Gastrocnemius medialis (tissue), 4 donors: ENCODE measurements at regions of chr1 and their contacts with region 1.

Region 1: GRCh38 chr1:226407497-226408284 is at the start of gene PARP1:
- DNase-seq: peak; percentile 80 to 87
- ATAC-seq: peak; percentile 77 to 81
- H3K4me3 ChIP-seq: peak within 1 kb of the TSS; percentile 67 to 95 (median 87)
- H3K27ac ChIP-seq: peak within 1 kb of the TSS; percentile 71 to 87 (median 80)
- H3K4me1 ChIP-seq: peaks cover 43 to 45% of the 10 kb centered on the region in 2 donors
- H3K27me3 ChIP-seq: no peaks in the 10 kb centered on the region
- CTCF ChIP-seq: peak in 4 of 5 experiments; percentile 85 to 97 (median 93)
- POLR2A ChIP-seq: peak; percentile 75 to 78
- total RNA-seq, gene PARP1: 63.8 to 117 (median 99.7) TPM

Region 2: DNA sequence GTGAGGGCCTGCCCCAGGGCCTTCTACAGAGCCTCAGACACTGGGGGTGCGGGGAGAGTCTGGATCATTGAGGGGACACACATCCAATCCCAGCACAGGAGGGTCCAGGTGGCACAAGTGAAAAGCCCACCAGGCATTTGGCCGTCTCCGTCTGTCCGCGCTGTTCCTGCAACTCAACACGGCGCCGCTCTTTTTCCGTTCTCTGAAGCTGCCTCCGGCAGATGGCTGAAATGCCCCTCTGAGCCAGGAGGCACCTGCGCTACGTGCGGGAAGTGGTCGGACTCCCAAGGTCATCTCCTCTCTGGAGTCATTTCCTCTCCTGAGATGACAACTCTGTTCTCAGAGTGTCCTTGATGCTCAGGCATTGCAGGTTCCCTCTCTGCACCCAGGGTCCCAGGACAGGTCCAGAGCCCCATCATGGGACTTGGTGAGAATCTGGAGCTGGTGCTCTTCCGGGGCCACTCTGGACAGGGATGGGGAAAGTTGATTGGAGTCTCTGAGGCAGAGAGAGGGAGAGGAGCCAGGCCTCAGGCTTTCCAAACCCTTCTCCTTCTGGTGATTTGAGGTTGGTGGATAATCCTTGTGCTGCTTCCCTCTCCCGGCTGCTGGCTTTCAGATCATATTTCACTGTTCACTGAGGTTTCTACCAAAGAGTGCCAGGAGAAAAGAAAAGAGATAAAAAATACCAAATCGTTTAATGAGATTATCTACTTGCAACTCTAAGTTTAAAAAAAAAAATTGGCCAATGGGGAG is 198.2 kb before region 1 on chr1:
- in situ Hi-C with region 1: no loop called
- intact Hi-C with region 1: no loop called
- DNase-seq: no peak
- ATAC-seq: no peak
- H3K4me3 ChIP-seq: no peak overlapping the region
- H3K27ac ChIP-seq: no peak overlapping the region
- H3K4me1 ChIP-seq: no peaks in the 10 kb centered on the region
- H3K27me3 ChIP-seq: no peaks in the 10 kb centered on the region
- CTCF ChIP-seq: no peak
- POLR2A ChIP-seq: no peak

Region 3: DNA sequence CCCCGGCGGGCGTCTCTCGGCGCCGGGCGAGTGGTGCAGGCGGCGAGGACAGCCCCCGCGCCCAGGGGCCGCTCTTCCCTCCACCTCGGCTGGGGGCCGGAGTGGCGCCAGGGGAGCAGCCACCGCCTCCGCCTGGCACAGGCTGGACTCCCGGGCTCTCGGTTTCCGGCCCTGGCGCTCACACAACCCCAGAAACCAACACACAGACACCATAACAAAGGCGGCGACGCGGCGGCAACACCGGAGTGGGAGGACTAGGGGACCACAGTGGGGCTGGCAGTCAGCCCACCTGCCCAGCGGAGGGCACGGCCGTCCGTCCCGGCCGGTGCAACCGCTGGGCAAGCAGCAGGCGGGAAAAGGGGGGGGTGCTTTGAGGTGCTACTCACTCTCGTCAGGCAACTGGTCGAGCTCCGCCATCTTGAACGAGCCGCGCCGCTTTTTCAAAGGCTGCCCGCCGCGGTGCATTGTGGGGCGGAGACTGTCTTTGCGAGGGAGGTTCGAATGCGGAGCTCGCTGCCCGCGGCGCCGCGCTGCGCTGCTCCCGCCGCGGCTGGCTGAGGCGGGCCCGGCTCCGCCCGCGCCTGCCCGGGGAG is 98.9 kb before region 1 on chr1 and contains the start of gene LIN9:
- in situ Hi-C with region 1: no loop called
- intact Hi-C with region 1: loop called (anchors 2 kb)
- DNase-seq: peak; percentile 69 to 75
- ATAC-seq: peak; percentile 96 to 99
- H3K4me3 ChIP-seq: peak within 1 kb of the TSS; percentile 86 to 98 (median 96)
- H3K27ac ChIP-seq: peak within 1 kb of the TSS; percentile 76 to 85 (median 82)
- H3K4me1 ChIP-seq: peaks cover 7 to 9% of the 10 kb centered on the region in 2 donors
- H3K27me3 ChIP-seq: no peaks in the 10 kb centered on the region
- CTCF ChIP-seq: no peak
- POLR2A ChIP-seq: peak in 1 of 2 donors; percentile 39
- total RNA-seq, gene LIN9: 2.1 to 4.7 (median 2.8) TPM

Region 4: DNA sequence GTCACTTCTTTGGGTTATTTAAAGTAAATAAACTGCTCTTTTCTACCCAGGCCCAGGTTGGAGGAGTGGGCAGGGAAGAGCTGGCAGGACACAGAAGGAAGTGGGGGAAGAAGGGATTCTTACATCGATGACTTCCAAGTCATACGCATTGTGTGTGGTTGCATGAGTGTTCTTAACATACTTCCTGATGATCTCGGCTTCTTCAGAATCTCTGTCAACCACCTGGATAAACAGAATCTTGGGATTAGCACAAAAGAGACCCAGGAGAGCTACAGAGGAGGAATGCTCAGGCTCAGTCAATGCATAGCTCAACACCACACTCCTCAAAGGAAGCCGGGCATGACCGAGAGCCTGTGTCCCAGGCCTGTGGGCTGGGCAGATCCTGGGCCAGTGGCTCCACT is 41.9 kb before region 1 on chr1:
- in situ Hi-C with region 1: no loop called
- intact Hi-C with region 1: loop called (anchors 2 kb)
- DNase-seq: no peak
- ATAC-seq: no peak
- H3K4me3 ChIP-seq: no peak overlapping the region
- H3K27ac ChIP-seq: no peak overlapping the region
- H3K4me1 ChIP-seq: peaks cover 9 to 15% of the 10 kb centered on the region in 2 donors
- H3K27me3 ChIP-seq: no peaks in the 10 kb centered on the region
- CTCF ChIP-seq: no peak
- POLR2A ChIP-seq: no peak

Region 5: DNA sequence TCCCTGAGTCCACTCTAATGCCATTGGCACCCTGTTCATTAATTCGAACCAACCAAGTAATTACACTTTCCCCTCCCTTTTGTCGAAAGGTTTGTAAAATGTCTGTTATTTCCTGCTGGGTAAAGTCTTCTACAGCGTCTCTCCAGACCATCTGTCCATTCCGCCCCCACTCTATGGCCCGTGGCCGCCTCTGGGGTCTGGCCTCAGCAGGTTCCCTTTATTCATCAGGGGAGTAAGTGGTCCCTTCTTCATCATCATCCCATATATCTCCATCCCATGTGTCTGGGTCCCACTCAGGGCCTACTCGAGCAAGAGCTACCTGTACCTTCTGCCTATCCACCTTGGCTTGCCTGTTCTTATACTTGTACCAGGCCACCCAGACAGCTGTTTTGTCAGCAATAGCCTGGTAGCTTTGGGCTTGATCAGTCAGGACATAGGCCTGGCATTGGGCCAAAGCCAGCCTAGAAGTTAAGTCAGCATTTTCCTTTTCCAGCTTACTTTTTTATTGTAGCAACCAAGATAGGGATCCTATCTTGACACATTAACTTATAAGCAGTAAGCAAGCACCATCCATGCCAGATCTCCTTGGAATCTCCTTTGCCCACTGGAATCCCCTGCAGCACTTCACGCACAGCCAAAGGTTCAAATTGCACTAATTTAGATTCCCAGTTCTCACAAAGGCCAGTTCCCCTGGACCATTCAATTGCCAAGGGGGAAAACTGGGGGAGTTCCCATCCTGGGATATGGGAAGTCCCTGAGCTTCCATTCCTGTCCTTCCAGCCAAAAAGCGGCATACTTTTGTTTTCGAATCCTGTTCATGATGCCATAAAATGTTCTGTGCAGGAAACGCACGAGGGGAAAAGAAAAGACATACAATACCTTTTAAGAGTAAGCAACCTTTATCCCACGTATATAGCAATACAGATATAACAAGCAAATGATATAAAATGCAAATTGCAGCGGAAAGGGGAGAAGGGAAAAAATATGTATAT is 134.2 kb after region 1 on chr1:
- in situ Hi-C with region 1: no loop called
- intact Hi-C with region 1: loop called (anchors 5 kb)
- DNase-seq: peak in 1 of 2 donors; percentile 43
- ATAC-seq: peak in 1 of 2 donors; percentile 30
- H3K4me3 ChIP-seq: peak overlapping the region; percentile 7 to 42 (median 36)
- H3K27ac ChIP-seq: peak overlapping the region; percentile 56 to 68 (median 64)
- H3K4me1 ChIP-seq: peaks cover 5 to 20% of the 10 kb centered on the region in 2 donors
- H3K27me3 ChIP-seq: no peaks in the 10 kb centered on the region
- CTCF ChIP-seq: no peak
- POLR2A ChIP-seq: no peak